ENCODE measurements at regions of chr3 and their contacts with region 1.

Region 1: DNA sequence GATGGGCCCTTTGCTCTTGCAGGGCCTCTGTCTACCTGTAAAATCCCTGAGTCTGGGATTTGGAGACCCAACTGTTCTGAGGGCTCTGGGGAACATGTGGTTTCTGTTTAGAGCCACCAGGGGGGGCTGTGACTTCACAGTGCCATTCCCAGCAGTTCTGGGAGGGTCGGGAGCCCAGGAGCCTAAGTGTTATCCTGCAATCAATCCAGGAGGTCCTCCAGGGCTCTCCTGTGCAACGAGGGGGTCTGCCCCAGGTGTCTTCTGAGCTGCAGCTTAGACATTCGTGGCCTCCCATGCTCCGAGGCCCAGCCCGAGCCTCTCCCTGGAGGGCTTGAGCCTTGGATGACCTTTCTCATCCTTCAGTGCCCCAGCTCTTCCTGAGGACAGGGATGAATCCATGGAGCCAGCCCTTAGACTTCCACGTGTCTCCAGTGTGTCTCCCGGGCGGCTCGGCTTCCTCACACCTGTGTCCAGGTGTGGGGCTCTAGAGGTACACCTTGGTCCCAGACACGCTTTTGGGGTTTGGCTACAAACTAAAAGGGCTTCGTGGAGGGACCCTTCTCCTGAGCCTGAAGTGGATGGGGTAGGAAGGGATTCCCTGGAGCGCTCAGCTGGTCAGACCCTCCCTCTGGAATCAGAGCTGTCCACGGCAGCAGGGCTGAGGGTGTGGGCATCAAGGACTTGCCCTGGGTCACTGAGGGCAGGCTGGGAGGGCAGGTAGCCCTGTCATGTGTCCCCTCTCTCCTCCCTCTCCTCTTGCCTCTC is 20.3 kb upstream of the ABTB1 start:
- DNase-seq: peak; percentile 63
- ATAC-seq: peak; percentile 86 to 91

Region 2: DNA sequence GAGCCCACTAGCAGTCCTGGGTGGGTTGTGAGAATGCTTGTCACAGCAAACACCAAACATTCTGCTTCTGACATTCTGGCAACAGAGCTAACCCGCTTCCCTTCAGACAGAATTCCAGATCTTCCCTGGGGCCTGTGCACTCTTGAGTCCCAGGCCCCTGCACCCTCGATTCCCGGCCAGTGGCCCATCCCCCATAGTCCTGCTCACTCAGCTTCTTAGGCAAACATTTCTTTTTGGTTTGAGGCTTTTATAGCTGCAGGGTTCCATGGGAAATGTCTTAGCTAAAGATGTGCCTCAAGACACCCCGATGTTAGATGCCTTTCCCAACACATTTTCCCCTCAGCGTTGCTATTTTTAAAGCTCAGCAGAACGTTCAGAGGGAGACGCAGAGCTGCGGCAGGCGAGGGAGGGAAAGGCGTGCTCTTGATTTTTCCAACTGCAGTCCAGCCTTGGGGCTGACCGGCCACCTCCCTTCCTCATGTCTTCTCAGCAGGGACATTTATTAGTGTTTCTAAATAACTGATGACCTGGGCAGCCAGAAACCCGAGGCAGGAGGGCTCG is 55.5 kb after region 1 on chr3:
- intact Hi-C with region 1: no loop called
- DNase-seq: no peak
- ATAC-seq: no peak

Region 3: GRCh38 chr3:127831723-127832172 is 179.3 kb after region 1 on chr3:
- intact Hi-C with region 1: loop called in 1 of 2 experiments (anchors 5 kb)
- DNase-seq: peak; percentile 46
- ATAC-seq: peak; percentile 55 to 66

Region 4: GRCh38 chr3:127970966-127971592 is 318.7 kb after region 1 on chr3:
- intact Hi-C with region 1: loop called (anchors 2 to 5 kb)
- DNase-seq: no peak
- ATAC-seq: peak; percentile 67 to 71